Posterior vena cava (tissue), 2 donors: ENCODE measurements at regions of chr2 and their contacts with region 1.

Region 1: DNA sequence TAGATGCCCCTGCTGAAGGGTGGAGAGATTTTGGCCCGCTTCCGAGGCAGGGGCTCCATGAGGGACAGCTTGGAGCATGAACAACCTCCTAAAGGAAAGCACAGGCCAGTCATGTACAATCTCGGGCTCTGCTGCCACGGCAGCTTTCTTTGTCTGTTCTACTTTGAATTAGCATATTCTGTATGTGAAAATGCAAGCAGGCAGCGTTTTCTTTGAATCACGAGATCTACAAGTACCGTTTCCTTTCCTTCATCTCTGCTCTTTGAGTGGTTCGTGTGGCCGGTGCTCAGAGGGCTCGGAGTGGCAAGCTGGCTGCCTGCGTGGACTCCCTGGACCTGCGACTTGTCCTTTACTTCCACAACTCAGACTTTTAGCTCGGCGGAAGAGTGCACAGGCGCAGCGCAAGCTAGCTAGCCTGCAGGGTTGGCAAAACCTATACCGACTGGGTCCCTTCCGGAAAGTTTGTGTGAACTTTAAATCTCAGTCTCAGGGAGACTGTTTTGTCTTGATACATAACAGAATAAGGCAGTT is 6.9 kb downstream of the TWIST2 start:
- DNase-seq: peak; percentile 65

Region 2: DNA sequence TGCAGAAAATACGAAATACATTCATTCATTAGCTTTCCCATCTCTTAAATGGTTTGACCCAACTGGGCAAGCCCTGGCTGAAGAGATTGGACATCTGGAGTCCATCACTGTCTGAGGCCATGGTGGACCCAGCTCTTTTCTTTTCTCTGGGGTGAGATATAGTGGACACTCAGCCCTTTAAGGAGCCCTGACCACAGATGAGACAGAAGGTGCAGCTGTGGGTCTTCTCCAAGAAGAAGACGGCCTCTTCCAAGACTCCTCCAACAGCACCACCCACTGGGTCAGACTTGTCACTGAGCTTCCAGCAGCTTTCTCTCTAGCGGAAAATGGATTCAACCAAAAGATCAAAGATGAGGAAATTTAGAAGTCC is 20.3 kb after region 1 on chr2:
- intact Hi-C with region 1: loop called in 1 of 2 experiments (anchors 2 kb)
- DNase-seq: peak; percentile 86

Region 3: DNA sequence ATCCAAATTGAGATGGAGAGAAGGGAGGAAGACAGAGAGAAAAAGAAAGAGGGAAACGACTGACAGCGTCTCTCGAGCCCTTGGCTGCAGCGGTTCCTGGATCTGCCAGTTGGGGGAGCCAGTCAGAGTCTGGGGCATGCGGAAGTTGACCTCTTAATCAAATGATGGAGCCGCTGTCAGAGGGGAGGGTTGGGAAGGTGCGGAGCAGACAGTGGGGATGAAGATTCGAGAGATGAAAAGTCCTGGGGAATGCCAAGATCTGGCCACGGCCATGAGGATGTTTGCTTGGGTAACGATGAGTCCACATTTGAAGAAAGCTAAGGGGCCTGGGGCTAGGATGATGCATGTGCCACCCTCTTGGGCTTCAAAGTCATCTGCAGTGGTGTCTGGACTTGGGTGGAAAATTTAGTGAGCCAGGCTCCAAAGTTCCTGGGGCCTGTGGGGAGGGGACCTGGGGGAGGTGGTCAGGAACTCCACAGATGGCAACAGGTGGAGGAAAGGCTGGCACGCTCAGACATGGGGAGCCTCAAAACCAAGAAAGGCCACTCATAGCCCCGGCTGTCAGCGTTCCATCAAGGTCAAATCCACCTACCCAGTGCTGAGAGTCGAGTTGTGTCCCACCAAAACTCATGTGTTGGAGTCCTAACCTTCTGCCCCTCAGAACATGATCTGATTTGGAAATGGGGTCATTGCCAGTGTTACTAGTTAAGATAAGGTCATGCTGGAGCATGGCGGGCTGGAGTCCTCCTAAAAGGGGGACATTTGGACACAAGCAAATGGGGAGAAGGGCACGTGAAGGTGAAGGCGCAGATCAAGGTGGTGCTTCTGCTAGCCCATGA is 970.3 kb after region 1 on chr2:
- intact Hi-C with region 1: loop called in 1 of 2 experiments (anchors 5 kb)
- DNase-seq: peak; percentile 63